ENCODE measurements at regions of chrX and their contacts with region 1.

Region 1: GRCh38 chrX:132071260-132071659 is 48.2 kb downstream of the STK26 start:
- DNase-seq: peak in 1 of 2 donors; percentile 5
- ATAC-seq: peak in 2 of 3 donors; percentile 42 to 46
- H3K4me3 ChIP-seq: no peak overlapping the region
- H3K4me3 Mint-ChIP-seq: no peak overlapping the region
- H3K27ac ChIP-seq: no peak overlapping the region
- H3K27ac Mint-ChIP-seq: no peak overlapping the region
- H3K4me1 ChIP-seq: no peaks in the 10 kb centered on the region
- H3K4me1 Mint-ChIP-seq: no peaks in the 10 kb centered on the region
- H3K27me3 ChIP-seq: no peaks in the 10 kb centered on the region
- H3K27me3 Mint-ChIP-seq: no peaks in the 10 kb centered on the region
- CTCF ChIP-seq: peak; percentile 29

Region 2: GRCh38 chrX:131778269-131779218 is 292.7 kb before region 1 on chrX:
- intact Hi-C with region 1: no loop called
- DNase-seq: no peak
- ATAC-seq: peak in 1 of 3 donors; percentile 86
- H3K4me3 ChIP-seq: no peak overlapping the region
- H3K4me3 Mint-ChIP-seq: peak overlapping the region; percentile 87
- H3K27ac ChIP-seq: no peak overlapping the region
- H3K27ac Mint-ChIP-seq: peak overlapping the region in 1 of 2 donors; percentile 79
- H3K4me1 ChIP-seq: no peaks in the 10 kb centered on the region
- H3K4me1 Mint-ChIP-seq: peaks cover 0 to 11% of the 10 kb centered on the region in 2 donors
- H3K27me3 ChIP-seq: no peaks in the 10 kb centered on the region
- H3K27me3 Mint-ChIP-seq: no peaks in the 10 kb centered on the region
- CTCF ChIP-seq: no peak

Region 3: GRCh38 chrX:131894987-131895386 is 176.3 kb before region 1 on chrX:
- intact Hi-C with region 1: loop called (anchors 10 kb)
- DNase-seq: no peak
- ATAC-seq: no peak
- H3K4me3 ChIP-seq: no peak overlapping the region
- H3K4me3 Mint-ChIP-seq: no peak overlapping the region
- H3K27ac ChIP-seq: no peak overlapping the region
- H3K27ac Mint-ChIP-seq: no peak overlapping the region
- H3K4me1 ChIP-seq: no peaks in the 10 kb centered on the region
- H3K4me1 Mint-ChIP-seq: no peaks in the 10 kb centered on the region
- H3K27me3 ChIP-seq: no peaks in the 10 kb centered on the region
- H3K27me3 Mint-ChIP-seq: peaks cover 4 to 27% of the 10 kb centered on the region in 2 donors
- CTCF ChIP-seq: no peak

Region 4: GRCh38 chrX:132333351-132333750 is 262.1 kb after region 1 on chrX:
- intact Hi-C with region 1: no loop called
- DNase-seq: no peak
- ATAC-seq: no peak
- H3K4me3 ChIP-seq: no peak overlapping the region
- H3K4me3 Mint-ChIP-seq: no peak overlapping the region
- H3K27ac ChIP-seq: no peak overlapping the region
- H3K27ac Mint-ChIP-seq: no peak overlapping the region
- H3K4me1 ChIP-seq: no peaks in the 10 kb centered on the region
- H3K4me1 Mint-ChIP-seq: no peaks in the 10 kb centered on the region
- H3K27me3 ChIP-seq: no peaks in the 10 kb centered on the region
- H3K27me3 Mint-ChIP-seq: peaks cover 0 to 17% of the 10 kb centered on the region in 2 donors
- CTCF ChIP-seq: no peak

Measured in natural killer cell (primary cell).